ENCODE measurements at regions of chr15 and their contacts with region 1.

Region 1: GRCh38 chr15:60916679-60917460 is 312.2 kb downstream of the RORA start:
- DNase-seq: peak; percentile 59 to 89 (median 82)
- ATAC-seq: peak; percentile 99
- H3K4me3 ChIP-seq: no peak overlapping the region
- H3K4me3 Mint-ChIP-seq: peak overlapping the region in 1 of 10 donors; percentile 23
- H3K27ac ChIP-seq: no peak overlapping the region
- H3K27ac Mint-ChIP-seq: peak overlapping the region in 7 of 9 donors; percentile 12 to 79 (median 69)
- H3K4me1 ChIP-seq: peaks cover 5 to 6% of the 10 kb centered on the region in 2 donors
- H3K4me1 Mint-ChIP-seq: peaks cover 7 to 21% (median 10%) of the 10 kb centered on the region in 7 donors
- H3K27me3 ChIP-seq: no peaks in the 10 kb centered on the region
- H3K27me3 Mint-ChIP-seq: peaks cover 0 to 3% (median 0%) of the 10 kb centered on the region in 5 donors

Region 2: GRCh38 chr15:60070838-60071493 is 845.9 kb before region 1 on chr15:
- CTCF ChIA-PET with region 1: no interaction called
- POLR2A ChIA-PET with region 1: no interaction called
- intact Hi-C with region 1: no loop called
- DNase-seq: no peak
- ATAC-seq: no peak
- H3K4me3 ChIP-seq: no peak overlapping the region
- H3K4me3 Mint-ChIP-seq: no peak overlapping the region
- H3K27ac ChIP-seq: no peak overlapping the region
- H3K27ac Mint-ChIP-seq: no peak overlapping the region
- H3K4me1 ChIP-seq: peaks cover 4 to 8% of the 10 kb centered on the region in 2 donors
- H3K4me1 Mint-ChIP-seq: peaks cover 3 to 24% (median 16%) of the 10 kb centered on the region in 7 donors
- H3K27me3 ChIP-seq: no peaks in the 10 kb centered on the region
- H3K27me3 Mint-ChIP-seq: peaks cover 0 to 13% (median 4%) of the 10 kb centered on the region in 5 donors

Region 3: GRCh38 chr15:60362321-60363086 is 554.4 kb before region 1 on chr15:
- CTCF ChIA-PET with region 1: interaction called, 13 read pairs
- POLR2A ChIA-PET with region 1: interaction called, 3 read pairs
- intact Hi-C with region 1: loop called (anchors 1 to 2 kb)
- DNase-seq: peak in 1 of 9 donors; percentile 46
- ATAC-seq: peak; percentile 31
- H3K4me3 ChIP-seq: no peak overlapping the region
- H3K4me3 Mint-ChIP-seq: peak overlapping the region in 1 of 10 donors; percentile 54
- H3K27ac ChIP-seq: no peak overlapping the region
- H3K27ac Mint-ChIP-seq: peak overlapping the region in 3 of 9 donors; percentile 47 to 81 (median 78)
- H3K4me1 ChIP-seq: peaks cover 0 to 7% of the 10 kb centered on the region in 2 donors
- H3K4me1 Mint-ChIP-seq: peaks cover 6 to 39% (median 12%) of the 10 kb centered on the region in 7 donors
- H3K27me3 ChIP-seq: no peaks in the 10 kb centered on the region
- H3K27me3 Mint-ChIP-seq: no peaks in the 10 kb centered on the region

Region 4: DNA sequence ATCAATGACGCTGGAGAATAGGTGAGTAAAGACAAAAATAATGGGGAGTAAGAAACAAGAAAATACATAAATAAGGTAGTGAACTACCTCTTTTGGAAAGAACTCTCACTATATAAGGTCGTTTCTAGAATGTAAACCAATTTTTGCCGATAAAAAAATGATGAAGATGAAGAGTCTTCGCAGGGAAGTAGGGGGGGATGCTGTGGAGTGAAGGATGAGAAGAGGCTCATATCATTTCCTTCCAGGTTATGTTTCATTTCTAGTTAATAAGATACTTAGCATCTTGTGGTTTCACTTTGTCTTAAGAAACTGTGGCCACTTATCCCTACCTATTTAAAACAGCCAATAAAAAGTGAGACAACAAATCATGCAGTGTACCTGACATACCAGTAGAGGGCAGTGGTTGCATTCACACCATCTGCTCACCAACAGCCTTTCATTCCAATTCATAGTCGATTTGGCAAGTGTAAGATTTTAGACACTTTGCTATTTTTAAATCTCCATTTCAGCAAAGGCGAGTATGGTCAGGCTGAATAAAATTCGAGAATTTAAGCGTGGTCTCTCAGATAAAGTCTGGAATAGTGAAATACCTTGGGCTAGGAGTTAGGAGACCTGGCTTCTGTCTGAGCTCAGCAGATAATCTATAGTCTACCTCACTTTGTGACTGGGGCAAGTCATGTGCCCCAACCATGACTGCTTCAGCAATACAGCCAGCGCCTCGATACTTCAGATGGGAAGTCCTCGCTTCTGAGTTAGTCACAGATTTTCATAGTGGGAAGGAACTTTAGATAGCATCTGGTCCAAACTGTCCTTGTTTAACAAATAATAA is 409.1 kb before region 1 on chr15:
- CTCF ChIA-PET with region 1: interaction called, 34 read pairs
- POLR2A ChIA-PET with region 1: interaction called, 3 read pairs
- intact Hi-C with region 1: loop called (anchors 1 kb)
- DNase-seq: peak in 7 of 9 donors; percentile 55 to 80 (median 73)
- ATAC-seq: peak; percentile 97
- H3K4me3 ChIP-seq: no peak overlapping the region
- H3K4me3 Mint-ChIP-seq: peak overlapping the region in 5 of 10 donors; percentile 7 to 30 (median 10)
- H3K27ac ChIP-seq: peak overlapping the region; percentile 6
- H3K27ac Mint-ChIP-seq: peak overlapping the region; percentile 38 to 86 (median 55)
- H3K4me1 ChIP-seq: peaks cover 4 to 7% of the 10 kb centered on the region in 2 donors
- H3K4me1 Mint-ChIP-seq: peaks cover 16 to 60% (median 42%) of the 10 kb centered on the region in 7 donors
- H3K27me3 ChIP-seq: no peaks in the 10 kb centered on the region
- H3K27me3 Mint-ChIP-seq: no peaks in the 10 kb centered on the region

Region 5: DNA sequence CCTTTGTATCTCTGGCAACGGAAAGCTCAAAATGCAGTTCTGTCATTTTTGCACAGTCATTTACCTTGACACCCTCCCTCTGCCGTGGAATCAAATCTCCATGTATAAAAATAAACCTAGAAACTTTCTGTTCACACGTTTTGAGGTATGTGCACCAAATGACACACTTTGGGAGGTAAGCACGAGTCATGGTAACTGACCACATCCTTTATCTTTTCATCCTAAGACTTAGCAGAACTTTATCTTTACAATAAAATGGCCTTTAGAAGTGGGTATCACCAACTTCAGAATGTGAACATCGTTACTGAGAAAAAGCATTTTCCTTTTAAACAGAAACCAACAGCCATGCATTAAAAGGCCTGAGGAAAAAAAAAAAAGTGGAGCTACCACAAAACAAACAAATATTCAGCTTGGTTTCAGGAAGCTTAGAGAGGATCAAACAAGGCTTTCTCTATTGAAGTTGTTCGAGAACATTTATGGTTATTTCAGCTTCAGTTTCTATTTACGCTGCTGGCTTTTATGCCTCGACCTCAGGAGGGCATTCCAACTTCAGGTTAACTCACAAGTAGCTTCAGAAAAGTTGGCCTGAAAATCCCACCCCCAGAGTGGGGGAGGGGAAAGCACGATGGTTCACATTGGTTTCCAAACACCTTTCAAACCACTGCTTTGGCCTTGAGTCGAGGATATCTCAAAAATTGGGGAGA is 266.9 kb before region 1 on chr15:
- CTCF ChIA-PET with region 1: interaction called, 4 read pairs
- POLR2A ChIA-PET with region 1: no interaction called
- intact Hi-C with region 1: loop called (anchors 1 to 2 kb)
- DNase-seq: peak in 8 of 9 donors; percentile 42 to 78 (median 62)
- ATAC-seq: peak; percentile 90
- H3K4me3 ChIP-seq: peak overlapping the region; percentile 33
- H3K4me3 Mint-ChIP-seq: peak overlapping the region; percentile 66 to 84 (median 75)
- H3K27ac ChIP-seq: no peak overlapping the region
- H3K27ac Mint-ChIP-seq: peak overlapping the region; percentile 55 to 96 (median 82)
- H3K4me1 ChIP-seq: peaks cover 18 to 23% of the 10 kb centered on the region in 2 donors
- H3K4me1 Mint-ChIP-seq: peaks cover 24 to 50% (median 39%) of the 10 kb centered on the region in 7 donors
- H3K27me3 ChIP-seq: no peaks in the 10 kb centered on the region
- H3K27me3 Mint-ChIP-seq: peaks cover 0 to 3% (median 0%) of the 10 kb centered on the region in 5 donors

Region 6: DNA sequence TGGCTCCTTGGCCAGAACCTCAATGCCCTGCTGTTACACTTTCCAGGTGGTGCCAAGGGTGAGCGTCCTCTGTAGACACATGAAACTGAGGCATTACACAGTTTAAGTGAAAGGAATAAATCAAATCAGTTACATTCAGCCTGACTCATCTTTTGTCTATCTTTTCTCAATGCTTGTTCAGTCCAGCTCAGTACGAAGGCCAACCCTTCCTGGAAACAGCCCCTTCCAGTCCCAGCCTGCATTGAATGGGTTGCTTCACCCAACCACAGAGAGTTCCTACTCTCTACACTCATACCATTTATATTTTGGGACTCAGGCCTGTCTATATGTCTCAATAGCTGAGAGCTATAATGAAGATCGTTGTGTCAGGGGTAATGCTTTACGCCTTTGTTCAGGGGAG is 51.4 kb before region 1 on chr15:
- CTCF ChIA-PET with region 1: interaction called, 12 read pairs
- POLR2A ChIA-PET with region 1: no interaction called
- intact Hi-C with region 1: loop called in 1 of 2 experiments (anchors 1 kb)
- DNase-seq: no peak
- ATAC-seq: no peak
- H3K4me3 ChIP-seq: no peak overlapping the region
- H3K4me3 Mint-ChIP-seq: no peak overlapping the region
- H3K27ac ChIP-seq: no peak overlapping the region
- H3K27ac Mint-ChIP-seq: peak overlapping the region in 1 of 9 donors; percentile 46
- H3K4me1 ChIP-seq: peaks cover 3 to 6% of the 10 kb centered on the region in 2 donors
- H3K4me1 Mint-ChIP-seq: peaks cover 2 to 22% (median 16%) of the 10 kb centered on the region in 7 donors
- H3K27me3 ChIP-seq: no peaks in the 10 kb centered on the region
- H3K27me3 Mint-ChIP-seq: peaks cover 0 to 8% (median 0%) of the 10 kb centered on the region in 5 donors

Region 7: DNA sequence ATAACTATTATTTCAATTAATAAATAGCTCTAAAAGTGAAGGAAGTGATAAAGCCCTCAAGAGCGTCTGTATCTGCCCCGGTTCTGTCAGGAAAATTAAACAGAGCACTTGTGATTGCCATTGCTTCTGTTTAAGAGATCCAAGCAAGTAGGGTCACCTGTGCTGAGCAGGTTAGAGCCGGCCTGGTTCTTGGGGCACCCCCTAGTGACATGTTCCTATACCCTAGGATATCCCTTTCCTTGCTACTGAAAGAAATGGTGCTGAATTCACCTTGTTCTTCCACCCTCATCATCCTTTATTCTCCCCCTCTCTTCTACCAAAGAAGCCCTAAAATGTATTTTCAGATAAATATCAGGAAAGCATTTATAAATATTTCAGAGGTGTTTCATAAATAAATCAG is 11.3 kb before region 1 on chr15:
- CTCF ChIA-PET with region 1: interaction called, 16 read pairs
- POLR2A ChIA-PET with region 1: interaction called, 3 read pairs
- intact Hi-C with region 1: loop called in 1 of 2 experiments (anchors 2 kb)
- DNase-seq: peak in 6 of 9 donors; percentile 24 to 45 (median 38)
- ATAC-seq: peak; percentile 68
- H3K4me3 ChIP-seq: no peak overlapping the region
- H3K4me3 Mint-ChIP-seq: no peak overlapping the region
- H3K27ac ChIP-seq: no peak overlapping the region
- H3K27ac Mint-ChIP-seq: peak overlapping the region in 1 of 9 donors; percentile 16
- H3K4me1 ChIP-seq: no peaks in the 10 kb centered on the region
- H3K4me1 Mint-ChIP-seq: peaks cover 0 to 38% (median 2%) of the 10 kb centered on the region in 7 donors
- H3K27me3 ChIP-seq: no peaks in the 10 kb centered on the region
- H3K27me3 Mint-ChIP-seq: peaks cover 0 to 17% (median 0%) of the 10 kb centered on the region in 5 donors

Region 8: DNA sequence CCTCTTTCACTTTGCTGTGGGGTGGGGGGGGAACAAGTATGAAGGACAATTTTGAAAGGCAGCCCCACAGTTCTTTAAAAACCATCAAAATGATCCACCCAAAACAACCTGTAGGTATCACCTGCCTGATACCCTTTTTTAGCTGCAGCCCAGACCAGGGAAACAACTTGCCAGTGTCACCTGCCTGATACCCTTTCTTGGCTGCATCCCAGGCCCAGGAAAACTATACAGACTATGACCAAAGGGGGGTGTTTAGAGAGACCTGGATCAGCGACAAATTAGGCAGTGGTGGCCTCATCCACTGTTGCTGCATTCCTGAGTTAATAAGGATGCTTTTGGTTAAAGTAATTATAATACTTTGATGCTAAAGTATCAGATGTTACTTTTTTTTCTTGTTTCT is 1021.4 kb after region 1 on chr15:
- CTCF ChIA-PET with region 1: no interaction called
- POLR2A ChIA-PET with region 1: no interaction called
- intact Hi-C with region 1: no loop called
- DNase-seq: no peak
- ATAC-seq: no peak
- H3K4me3 ChIP-seq: no peak overlapping the region
- H3K4me3 Mint-ChIP-seq: no peak overlapping the region
- H3K27ac ChIP-seq: no peak overlapping the region
- H3K27ac Mint-ChIP-seq: peak overlapping the region in 5 of 9 donors; percentile 17 to 55 (median 47)
- H3K4me1 ChIP-seq: no peaks in the 10 kb centered on the region
- H3K4me1 Mint-ChIP-seq: peaks cover 0 to 5% (median 0%) of the 10 kb centered on the region in 7 donors
- H3K27me3 ChIP-seq: no peaks in the 10 kb centered on the region
- H3K27me3 Mint-ChIP-seq: no peaks in the 10 kb centered on the region